CD8-positive, alpha-beta memory T cell (primary cell): ENCODE measurements at regions of chr1 and their contacts with region 1.

Region 1: DNA sequence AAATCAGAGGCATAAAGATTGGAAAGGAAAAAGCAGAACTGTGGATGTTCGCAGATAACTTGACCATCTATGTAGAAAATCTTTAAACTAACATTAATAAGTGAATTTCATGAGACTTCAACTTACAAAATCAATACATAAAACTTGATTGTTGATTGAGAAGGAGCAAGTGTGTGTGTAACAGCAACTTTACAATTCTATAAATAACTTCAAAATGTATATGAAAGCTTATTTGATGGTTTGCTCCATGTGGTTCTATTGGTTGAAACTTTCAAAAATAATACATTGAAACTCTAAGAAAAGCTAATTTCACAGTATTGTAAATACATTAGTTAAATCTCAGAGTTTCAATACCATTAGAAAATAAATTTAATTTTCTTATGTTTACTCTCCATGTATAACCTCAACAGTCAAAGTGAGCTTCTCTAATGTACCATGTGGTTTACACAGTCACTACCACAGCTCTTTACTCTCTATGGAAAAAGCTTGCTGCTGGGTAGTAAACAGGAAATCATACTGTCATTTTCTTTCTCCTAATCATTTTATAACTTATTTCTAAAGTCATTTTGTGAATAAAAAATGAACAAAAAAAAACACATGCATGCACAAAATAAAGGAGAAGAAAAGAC is 12.0 kb downstream of the AKT3 start:
- DNase-seq: peak in 2 of 5 donors; percentile 41 to 48
- H3K4me3 ChIP-seq: no peak overlapping the region
- H3K4me3 Mint-ChIP-seq: peak overlapping the region; percentile 29 to 71 (median 60)
- H3K27ac ChIP-seq: no peak overlapping the region
- H3K27ac Mint-ChIP-seq: peak overlapping the region; percentile 30 to 93 (median 86)
- H3K4me1 ChIP-seq: peaks cover 21% of the 10 kb centered on the region
- H3K4me1 Mint-ChIP-seq: peaks cover 52 to 79% (median 75%) of the 10 kb centered on the region in 3 donors
- H3K27me3 ChIP-seq: no peaks in the 10 kb centered on the region
- H3K27me3 Mint-ChIP-seq: no peaks in the 10 kb centered on the region

Region 2: GRCh38 chr1:243850452-243851256 is 12.6 kb after region 1 on chr1:
- CTCF ChIA-PET with region 1: no interaction called
- POLR2A ChIA-PET with region 1: interaction called, 18 read pairs
- DNase-seq: peak; percentile 76 to 88 (median 85)
- H3K4me3 ChIP-seq: peak overlapping the region; percentile 80
- H3K4me3 Mint-ChIP-seq: peak overlapping the region; percentile 91 to 98 (median 93)
- H3K27ac ChIP-seq: peak overlapping the region; percentile 80
- H3K27ac Mint-ChIP-seq: peak overlapping the region; percentile 91 to 99 (median 98)
- H3K4me1 ChIP-seq: peaks cover 20% of the 10 kb centered on the region
- H3K4me1 Mint-ChIP-seq: peaks cover 29 to 46% (median 41%) of the 10 kb centered on the region in 3 donors
- H3K27me3 ChIP-seq: no peaks in the 10 kb centered on the region
- H3K27me3 Mint-ChIP-seq: peaks cover 0 to 6% of the 10 kb centered on the region in 2 donors